ENCODE measurements at regions of chr7 and their contacts with region 1.

Region 1: GRCh38 chr7:1555809-1556540 is at the start of gene TMEM184A:
- DNase-seq: peak in 2 of 5 donors; percentile 63 to 79
- ATAC-seq: peak in 3 of 4 donors; percentile 33 to 56 (median 46)
- H3K4me3 ChIP-seq: no peak within 1 kb of the TSS
- H3K27ac ChIP-seq: peak within 1 kb of the TSS in 1 of 12 donors; percentile 26
- H3K4me1 ChIP-seq: peaks cover 0 to 25% (median 12%) of the 10 kb centered on the region in 12 donors
- H3K27me3 ChIP-seq: peaks cover 0 to 3% (median 0%) of the 10 kb centered on the region in 9 donors
- CTCF ChIP-seq: peak in 11 of 12 donors; percentile 14 to 56 (median 36)
- POLR2A ChIP-seq: no peak
- total RNA-seq, gene TMEM184A: 0.19 to 0.85 (median 0.47) TPM

Region 2: DNA sequence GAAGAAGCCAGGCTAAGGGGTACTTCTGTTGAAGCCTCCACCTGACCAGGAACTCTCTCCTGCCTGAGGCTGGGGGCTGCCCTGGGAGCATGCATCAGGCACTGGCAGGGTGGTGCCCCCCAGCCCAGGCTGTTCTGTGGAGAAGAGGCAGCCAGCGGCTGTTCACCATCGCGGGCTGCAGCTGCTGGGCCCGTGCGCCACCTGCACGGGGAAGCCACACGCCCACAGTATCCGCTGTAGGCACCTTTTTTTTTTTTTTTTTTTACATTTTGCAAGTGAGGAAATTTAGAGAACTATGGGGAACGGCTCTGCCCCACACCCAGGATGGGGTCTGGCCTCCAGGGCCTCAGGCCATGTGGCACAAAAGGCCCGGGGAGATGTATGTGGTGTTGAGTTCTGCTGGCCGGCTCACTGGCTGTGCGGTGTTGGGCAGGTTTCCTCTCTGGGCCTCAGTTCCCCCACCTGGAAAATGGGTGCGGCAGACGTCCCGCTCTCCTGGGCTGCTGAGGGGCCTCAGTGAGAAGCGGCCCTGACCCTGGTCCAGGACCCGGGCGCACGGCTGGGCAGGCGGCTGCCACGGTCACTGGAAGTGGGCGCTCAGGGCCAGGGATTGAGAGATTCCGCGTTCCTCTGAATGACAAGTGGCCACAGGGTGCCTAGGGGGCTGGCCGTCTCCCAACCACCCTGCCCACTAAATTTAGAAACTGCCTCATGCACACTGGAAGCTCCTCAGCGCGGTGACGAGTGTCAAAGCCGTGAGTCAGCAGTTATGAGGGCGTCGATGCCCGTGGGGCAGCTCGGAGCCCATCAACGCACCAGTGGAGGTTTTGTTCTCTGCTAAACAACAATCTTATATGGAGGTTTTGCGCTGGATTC is 43.0 kb before region 1 on chr7:
- intact Hi-C with region 1: loop called in 6 of 10 experiments (anchors 5 to 10 kb)
- DNase-seq: peak; percentile 87 to 91 (median 88)
- ATAC-seq: peak; percentile 92 to 94 (median 94)
- H3K4me3 ChIP-seq: peak overlapping the region in 8 of 12 donors; percentile 18 to 39 (median 30)
- H3K27ac ChIP-seq: peak overlapping the region; percentile 87 to 100 (median 98)
- H3K4me1 ChIP-seq: peaks cover 0 to 30% (median 22%) of the 10 kb centered on the region in 12 donors
- H3K27me3 ChIP-seq: no peaks in the 10 kb centered on the region
- CTCF ChIP-seq: peak in 1 of 12 donors; percentile 13
- POLR2A ChIP-seq: peak in 1 of 2 donors; percentile 45

Region 3: GRCh38 chr7:1593091-1593866 is 37.3 kb after region 1 on chr7:
- intact Hi-C with region 1: no loop called
- DNase-seq: no peak
- ATAC-seq: no peak
- H3K4me3 ChIP-seq: no peak overlapping the region
- H3K27ac ChIP-seq: no peak overlapping the region
- H3K4me1 ChIP-seq: peaks cover 0 to 9% (median 0%) of the 10 kb centered on the region in 12 donors
- H3K27me3 ChIP-seq: peaks cover 0 to 77% (median 39%) of the 10 kb centered on the region in 9 donors
- CTCF ChIP-seq: peak in 5 of 12 donors; percentile 7 to 26 (median 18)
- POLR2A ChIP-seq: no peak

Region 4: DNA sequence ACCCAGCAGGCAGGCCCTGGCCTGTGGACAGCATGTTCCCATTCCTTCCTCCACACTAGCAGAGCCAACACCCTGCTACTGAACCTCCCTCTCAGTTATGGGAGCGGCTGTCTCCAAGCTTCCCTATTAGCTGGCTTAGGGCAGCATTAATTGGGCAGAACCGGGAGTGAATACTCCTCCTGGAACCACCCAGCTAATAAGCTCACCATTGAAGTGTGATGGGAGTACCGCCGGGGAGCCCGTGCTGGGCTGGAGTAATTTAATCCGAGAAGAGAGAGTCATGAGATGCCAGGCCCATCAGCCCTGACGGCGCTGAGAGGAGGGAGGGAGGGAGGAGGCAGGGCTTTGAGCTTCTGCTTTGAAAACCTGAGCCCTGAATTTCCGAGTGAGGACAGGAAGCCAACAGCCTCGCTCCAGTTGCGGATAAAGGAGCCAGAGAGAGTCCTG is 82.3 kb after region 1 on chr7:
- intact Hi-C with region 1: no loop called
- DNase-seq: no peak
- ATAC-seq: peak; percentile 43 to 65 (median 50)
- H3K4me3 ChIP-seq: no peak overlapping the region
- H3K27ac ChIP-seq: peak overlapping the region in 1 of 12 donors; percentile 16
- H3K4me1 ChIP-seq: no peaks in the 10 kb centered on the region
- H3K27me3 ChIP-seq: peaks cover 0 to 22% (median 0%) of the 10 kb centered on the region in 9 donors
- CTCF ChIP-seq: no peak
- POLR2A ChIP-seq: no peak

Measured in heart left ventricle (tissue), 16 donors.